Activated CD4-positive, alpha-beta T cell treated with anti-CD3 and anti-CD28 coated beads, Interleukin-2, amount 10 ng/mL, durations not matched to agents 24 days and 14 days (primary cell): ENCODE measurements at regions of chr1 and their contacts with region 1.

Region 1: GRCh38 chr1:147890177-147890790 is 12.3 kb upstream of the GJA8 start:
- DNase-seq: peak; percentile 88
- H3K4me3 Mint-ChIP-seq: no peak overlapping the region
- H3K27ac Mint-ChIP-seq: no peak overlapping the region
- H3K4me1 Mint-ChIP-seq: peaks cover 4% of the 10 kb centered on the region
- H3K27me3 Mint-ChIP-seq: peaks cover 14% of the 10 kb centered on the region

Region 2: GRCh38 chr1:147273409-147274336 is 616.6 kb before region 1 on chr1:
- intact Hi-C with region 1: loop called (anchors 2 kb)
- DNase-seq: peak; percentile 80
- H3K4me3 Mint-ChIP-seq: no peak overlapping the region
- H3K27ac Mint-ChIP-seq: no peak overlapping the region
- H3K4me1 Mint-ChIP-seq: peaks cover 6% of the 10 kb centered on the region
- H3K27me3 Mint-ChIP-seq: no peaks in the 10 kb centered on the region

Region 3: GRCh38 chr1:147377263-147378246 is 512.7 kb before region 1 on chr1:
- intact Hi-C with region 1: no loop called
- DNase-seq: no peak
- H3K4me3 Mint-ChIP-seq: no peak overlapping the region
- H3K27ac Mint-ChIP-seq: no peak overlapping the region
- H3K4me1 Mint-ChIP-seq: no peaks in the 10 kb centered on the region
- H3K27me3 Mint-ChIP-seq: peaks cover 4% of the 10 kb centered on the region

Region 4: DNA sequence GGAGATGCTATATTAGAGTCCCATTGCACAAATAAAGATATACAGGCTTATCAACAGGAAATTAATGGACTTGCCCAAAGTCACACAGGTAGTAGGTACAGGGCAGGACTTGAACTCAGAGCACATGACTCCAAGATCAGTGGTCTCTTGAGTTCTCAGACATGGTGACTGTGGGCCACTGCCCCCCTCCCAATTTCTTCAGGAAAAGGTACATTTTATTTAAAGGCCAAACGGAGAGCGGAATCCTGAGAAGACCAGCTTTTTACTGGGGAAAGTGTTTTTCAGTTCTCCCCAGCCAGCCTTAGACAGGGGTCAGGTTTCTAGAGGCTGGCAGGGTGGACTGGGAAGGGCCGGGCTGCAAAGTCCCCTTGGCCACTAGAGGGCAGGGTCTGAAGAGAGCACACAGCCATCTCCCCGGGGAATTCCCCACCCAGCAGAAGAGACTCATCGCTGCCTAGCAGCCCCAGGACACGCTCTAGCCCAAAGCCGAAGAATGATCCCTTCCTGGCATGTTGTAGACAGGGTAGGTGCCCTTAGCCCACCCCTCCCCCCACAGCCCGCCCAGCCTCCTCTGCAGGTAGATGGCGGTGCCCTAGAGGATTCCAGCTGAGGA is 249.6 kb before region 1 on chr1:
- intact Hi-C with region 1: loop called (anchors 1 kb)
- DNase-seq: peak; percentile 93
- H3K4me3 Mint-ChIP-seq: no peak overlapping the region
- H3K27ac Mint-ChIP-seq: no peak overlapping the region
- H3K4me1 Mint-ChIP-seq: peaks cover 41% of the 10 kb centered on the region
- H3K27me3 Mint-ChIP-seq: no peaks in the 10 kb centered on the region

Region 5: GRCh38 chr1:147700042-147701006 is 190.0 kb before region 1 on chr1:
- intact Hi-C with region 1: loop called (anchors 1 kb)
- DNase-seq: peak; percentile 88
- H3K4me3 Mint-ChIP-seq: no peak overlapping the region
- H3K27ac Mint-ChIP-seq: no peak overlapping the region
- H3K4me1 Mint-ChIP-seq: peaks cover 7% of the 10 kb centered on the region
- H3K27me3 Mint-ChIP-seq: peaks cover 34% of the 10 kb centered on the region

Region 6: GRCh38 chr1:147723691-147724323 is 166.5 kb before region 1 on chr1:
- intact Hi-C with region 1: loop called (anchors 5 kb)
- DNase-seq: no peak
- H3K4me3 Mint-ChIP-seq: no peak overlapping the region
- H3K27ac Mint-ChIP-seq: no peak overlapping the region
- H3K4me1 Mint-ChIP-seq: no peaks in the 10 kb centered on the region
- H3K27me3 Mint-ChIP-seq: peaks cover 32% of the 10 kb centered on the region

Region 7: GRCh38 chr1:147735423-147735822 is 154.9 kb before region 1 on chr1:
- intact Hi-C with region 1: no loop called
- DNase-seq: no peak
- H3K4me3 Mint-ChIP-seq: no peak overlapping the region
- H3K27ac Mint-ChIP-seq: no peak overlapping the region
- H3K4me1 Mint-ChIP-seq: peaks cover 7% of the 10 kb centered on the region
- H3K27me3 Mint-ChIP-seq: peaks cover 26% of the 10 kb centered on the region